CD4-positive, alpha-beta T cell (primary cell): ENCODE measurements at regions of chr5 and their contacts with region 1.

Region 1: GRCh38 chr5:81533629-81534405 is 139.9 kb upstream of the ACOT12 start:
- DNase-seq: no peak
- ATAC-seq: no peak
- H3K4me3 ChIP-seq: no peak overlapping the region
- H3K4me3 Mint-ChIP-seq: peak overlapping the region; percentile 18
- H3K27ac ChIP-seq: no peak overlapping the region
- H3K27ac Mint-ChIP-seq: peak overlapping the region; percentile 53
- H3K4me1 ChIP-seq: peaks cover 18% of the 10 kb centered on the region
- H3K4me1 Mint-ChIP-seq: peaks cover 78% of the 10 kb centered on the region
- H3K27me3 ChIP-seq: no peaks in the 10 kb centered on the region
- H3K27me3 Mint-ChIP-seq: no peaks in the 10 kb centered on the region
- CTCF ChIP-seq: no peak

Region 2: DNA sequence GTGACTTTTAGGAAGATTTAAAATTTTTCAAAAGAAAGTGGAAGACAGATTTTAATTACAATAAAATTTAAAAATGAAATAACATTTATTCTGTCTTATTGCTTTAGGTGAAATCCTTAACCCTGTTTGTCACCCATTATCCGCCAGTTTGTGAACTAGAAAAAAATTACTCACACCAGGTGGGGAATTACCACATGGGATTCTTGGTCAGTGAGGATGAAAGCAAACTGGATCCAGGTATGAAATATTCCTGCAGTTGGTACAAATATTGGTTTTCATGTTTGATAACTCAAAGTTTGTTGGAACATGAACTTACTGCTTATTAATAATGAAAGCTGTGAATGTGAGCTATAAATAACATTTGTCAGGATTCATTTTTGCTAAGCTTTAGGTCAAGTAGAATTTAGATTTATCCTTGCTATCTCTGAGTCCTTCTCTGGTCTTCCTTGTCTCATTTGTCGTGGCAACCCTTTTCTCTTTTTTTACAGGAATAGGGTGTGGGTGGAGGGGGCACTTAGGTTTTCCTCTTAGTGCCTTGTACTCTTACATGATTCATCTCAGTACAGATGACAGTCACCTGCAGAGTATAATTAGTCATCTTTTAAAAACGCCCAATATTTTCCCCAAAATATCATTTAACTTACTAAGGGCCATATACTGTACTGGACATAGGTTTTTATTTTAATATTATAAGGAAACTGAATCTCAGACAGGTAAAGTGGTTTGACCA is 668.9 kb before region 1 on chr5:
- CTCF ChIA-PET with region 1: no interaction called
- POLR2A ChIA-PET with region 1: no interaction called
- intact Hi-C with region 1: no loop called
- DNase-seq: no peak
- ATAC-seq: no peak
- H3K4me3 ChIP-seq: no peak overlapping the region
- H3K4me3 Mint-ChIP-seq: no peak overlapping the region
- H3K27ac ChIP-seq: no peak overlapping the region
- H3K27ac Mint-ChIP-seq: no peak overlapping the region
- H3K4me1 ChIP-seq: no peaks in the 10 kb centered on the region
- H3K4me1 Mint-ChIP-seq: peaks cover 13% of the 10 kb centered on the region
- H3K27me3 ChIP-seq: no peaks in the 10 kb centered on the region
- H3K27me3 Mint-ChIP-seq: no peaks in the 10 kb centered on the region
- CTCF ChIP-seq: no peak

Region 3: DNA sequence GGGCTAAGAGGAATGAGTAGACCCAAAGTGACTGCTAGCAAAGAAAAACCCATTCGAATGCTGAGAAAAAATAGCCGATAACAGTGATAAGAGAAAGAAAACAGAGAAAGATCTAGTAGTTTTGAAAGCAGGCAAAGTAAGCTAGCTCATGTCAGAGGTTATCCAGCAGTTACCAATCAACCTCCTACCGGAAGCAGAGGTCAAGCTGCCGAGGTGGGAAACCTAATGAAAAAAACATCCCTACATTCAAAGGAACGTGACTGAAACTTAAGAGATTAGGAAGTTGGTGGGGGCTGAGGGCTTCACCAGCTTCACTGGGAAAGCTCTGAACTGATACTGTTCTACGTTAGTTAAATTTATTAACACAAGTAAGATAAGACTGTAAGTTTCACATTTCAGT is 184.5 kb after region 1 on chr5:
- CTCF ChIA-PET with region 1: no interaction called
- POLR2A ChIA-PET with region 1: no interaction called
- intact Hi-C with region 1: loop called in 1 of 2 experiments (anchors 10 kb)
- DNase-seq: peak in 1 of 14 experiments; percentile 8
- ATAC-seq: no peak
- H3K4me3 ChIP-seq: no peak overlapping the region
- H3K4me3 Mint-ChIP-seq: peak overlapping the region; percentile 9
- H3K27ac ChIP-seq: no peak overlapping the region
- H3K27ac Mint-ChIP-seq: peak overlapping the region; percentile 24
- H3K4me1 ChIP-seq: peaks cover 10% of the 10 kb centered on the region
- H3K4me1 Mint-ChIP-seq: peaks cover 94% of the 10 kb centered on the region
- H3K27me3 ChIP-seq: no peaks in the 10 kb centered on the region
- H3K27me3 Mint-ChIP-seq: no peaks in the 10 kb centered on the region
- CTCF ChIP-seq: no peak